K562 (cell line): ENCODE measurements at regions of chr1 and their contacts with region 1.

Region 1: GRCh38 chr1:36099681-36100341 is 11.1 kb downstream of the ADPRS start:
- DNase-seq: peak; percentile 87 to 91 (median 88)
- ATAC-seq: peak; percentile 96
- H3K4me3 ChIP-seq: peak overlapping the region; percentile 20; the same call in 1 of the 2 replicates
- H3K27ac ChIP-seq: no peak overlapping the region; the same call in 2 of the 3 replicates
- H3K4me1 ChIP-seq: peaks cover 0 to 36% of the 10 kb centered on the region in 2 experiments; a peak in 3 of 5 replicates
- H3K27me3 ChIP-seq: no peaks in the 10 kb centered on the region
- CTCF ChIP-seq: peak; percentile 94 to 95 (median 95)
- EP300 ChIP-seq: no peak
- POLR2A ChIP-seq: no peak
- RAD21 ChIP-seq: peak; percentile 95

Region 2: DNA sequence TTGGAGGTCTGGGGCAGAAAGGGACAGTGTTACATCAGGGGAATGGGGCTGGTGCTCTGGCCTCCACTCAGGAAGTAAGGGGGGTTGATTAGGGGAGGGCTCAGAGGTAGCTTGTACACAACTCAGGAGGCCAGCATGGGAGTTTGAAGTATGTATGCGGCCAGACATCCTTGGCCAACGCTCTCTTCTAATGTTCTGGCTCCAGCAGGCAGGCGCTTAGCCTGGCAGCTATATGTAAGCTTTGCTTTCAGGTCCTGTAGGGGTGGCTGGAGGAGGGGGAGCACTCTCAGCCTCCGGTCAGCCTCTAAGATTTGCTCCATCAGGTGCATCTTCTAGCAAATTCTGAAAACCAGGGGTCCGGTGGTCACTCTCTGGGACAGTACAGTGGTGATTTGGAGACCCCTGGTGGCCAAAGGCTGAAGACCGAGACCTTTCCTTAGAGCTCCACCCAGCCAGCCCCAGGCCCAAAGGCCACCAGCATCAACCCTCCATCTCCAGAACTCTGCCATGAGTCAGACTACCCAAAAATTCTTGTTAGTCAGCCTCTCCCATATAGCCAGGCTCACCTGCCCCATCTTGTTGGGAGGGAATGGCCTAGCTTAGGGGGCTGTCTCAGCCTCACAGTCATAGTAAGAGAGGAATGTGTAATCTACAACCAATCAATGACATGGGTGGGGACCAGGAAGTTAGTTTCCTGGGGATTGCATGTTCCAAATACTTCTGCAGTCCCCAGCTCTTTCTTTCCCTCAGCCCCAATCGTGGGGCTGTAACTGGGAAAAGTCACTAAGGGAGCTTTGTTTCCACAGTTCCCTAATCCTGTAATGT is 34.9 kb after region 1 on chr1:
- CTCF ChIA-PET with region 1: interaction called, 116 read pairs
- POLR2A ChIA-PET with region 1: interaction called, 4 read pairs
- in situ Hi-C with region 1: no loop called
- intact Hi-C with region 1: loop called (anchors 1 kb)
- DNase-seq: peak; percentile 85 to 90 (median 86)
- ATAC-seq: peak; percentile 97
- H3K4me3 ChIP-seq: no peak overlapping the region
- H3K27ac ChIP-seq: peak overlapping the region; percentile 38
- H3K4me1 ChIP-seq: peaks cover 5 to 6% of the 10 kb centered on the region in 2 experiments; a peak in 3 of 5 replicates
- H3K27me3 ChIP-seq: no peaks in the 10 kb centered on the region
- CTCF ChIP-seq: peak; percentile 92 to 99 (median 96)
- EP300 ChIP-seq: no peak
- POLR2A ChIP-seq: no peak
- RAD21 ChIP-seq: peak; percentile 89 to 93

Region 3: GRCh38 chr1:36149237-36149972 is 49.6 kb after region 1 on chr1 and contains the start of gene TRAPPC3:
- CTCF ChIA-PET with region 1: interaction called, 12 read pairs
- POLR2A ChIA-PET with region 1: interaction called, 3 read pairs
- in situ Hi-C with region 1: no loop called
- intact Hi-C with region 1: no loop called
- DNase-seq: peak; percentile 98 to 100 (median 99)
- ATAC-seq: peak; percentile 95
- H3K4me3 ChIP-seq: peak within 1 kb of the TSS; percentile 69
- H3K27ac ChIP-seq: peak within 1 kb of the TSS; percentile 87
- H3K4me1 ChIP-seq: peaks cover 31 to 34% of the 10 kb centered on the region in 2 experiments
- H3K27me3 ChIP-seq: no peaks in the 10 kb centered on the region
- CTCF ChIP-seq: peak; percentile 97 to 99 (median 99)
- EP300 ChIP-seq: peak; percentile 43; the same call in 1 of the 2 replicates
- POLR2A ChIP-seq: peak; percentile 95
- RAD21 ChIP-seq: peak; percentile 99 to 100
- polyA plus RNA-seq, gene TRAPPC3: 20.6 to 41.8 TPM

Region 4: DNA sequence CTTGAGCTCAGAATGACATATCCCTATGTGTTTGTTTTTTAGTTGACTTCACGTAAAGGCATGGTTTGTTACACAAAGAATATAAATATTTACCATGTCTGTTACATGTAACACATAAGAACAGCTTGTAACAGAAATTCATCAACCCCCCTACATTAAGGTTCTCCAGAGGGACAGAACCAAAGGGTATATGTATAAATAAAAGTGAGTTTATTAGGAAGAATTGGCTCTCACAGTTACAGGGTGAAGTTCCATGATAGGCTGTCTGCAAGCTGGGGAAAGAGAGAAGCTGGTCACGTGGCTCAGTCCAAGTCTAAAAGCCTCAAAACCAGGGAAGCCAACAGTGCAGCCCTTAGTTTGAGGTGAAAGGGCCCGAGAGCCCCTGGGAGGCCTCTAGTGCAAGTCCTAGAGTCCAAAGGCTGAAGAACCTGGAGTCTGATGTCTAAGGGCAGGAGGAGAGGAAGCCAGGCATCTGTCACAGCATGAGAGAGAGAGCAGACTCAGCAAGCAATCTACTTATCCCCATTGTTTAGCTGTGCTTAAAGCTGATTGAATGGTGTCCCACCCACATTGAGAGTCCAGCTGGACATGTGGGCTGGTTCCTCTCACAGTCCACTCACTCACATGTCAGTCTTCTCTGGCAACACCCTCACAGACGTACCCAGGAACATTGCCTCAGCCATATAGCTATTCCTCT is 140.3 kb after region 1 on chr1:
- CTCF ChIA-PET with region 1: no interaction called
- POLR2A ChIA-PET with region 1: no interaction called
- in situ Hi-C with region 1: no loop called
- intact Hi-C with region 1: no loop called
- DNase-seq: peak in 1 of 4 experiments; percentile 24
- ATAC-seq: peak; percentile 54
- H3K4me3 ChIP-seq: no peak overlapping the region
- H3K27ac ChIP-seq: peak overlapping the region; percentile 15; the same call in 1 of the 3 replicates
- H3K4me1 ChIP-seq: peaks cover 6% of the 10 kb centered on the region in 2 experiments; a peak in 4 of 5 replicates
- H3K27me3 ChIP-seq: no peaks in the 10 kb centered on the region
- CTCF ChIP-seq: no peak
- EP300 ChIP-seq: no peak
- POLR2A ChIP-seq: no peak
- RAD21 ChIP-seq: no peak

Region 5: DNA sequence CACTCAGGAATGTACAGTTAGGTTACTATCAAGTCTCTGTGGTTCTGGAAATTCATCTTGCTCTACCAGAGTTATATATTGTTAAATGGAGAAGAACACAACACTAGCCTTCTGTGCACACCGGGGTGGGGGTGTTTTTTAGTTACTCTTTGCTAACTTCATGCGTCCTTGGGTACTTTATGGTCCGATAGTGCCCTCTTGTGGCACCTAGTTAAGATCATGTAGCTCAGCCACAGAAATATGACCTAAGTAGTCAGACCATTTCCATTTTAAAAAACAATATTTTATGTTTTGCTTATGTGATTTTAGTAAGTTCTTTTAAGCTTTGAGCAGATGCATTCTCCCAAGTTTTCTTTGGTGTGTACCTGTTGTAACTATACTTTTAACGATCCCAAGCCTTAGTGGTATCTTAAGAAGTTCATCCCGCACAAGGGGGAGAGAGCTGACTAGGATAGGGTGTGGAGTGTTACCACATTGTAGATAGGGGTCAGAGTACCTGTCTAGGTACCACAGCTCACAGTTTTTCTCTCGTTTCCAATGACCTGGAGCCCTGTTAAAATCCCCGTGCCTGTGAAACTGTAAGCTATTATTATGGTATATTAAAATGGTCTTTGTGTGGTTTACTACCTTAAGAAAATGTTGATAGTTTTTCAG is 185.8 kb after region 1 on chr1:
- CTCF ChIA-PET with region 1: interaction called, 98 read pairs
- POLR2A ChIA-PET with region 1: interaction called, 3 read pairs
- in situ Hi-C with region 1: loop called (anchors 5 kb)
- intact Hi-C with region 1: loop called (anchors 1 kb)
- DNase-seq: peak; percentile 77 to 93 (median 80)
- ATAC-seq: peak; percentile 95
- H3K4me3 ChIP-seq: no peak overlapping the region
- H3K27ac ChIP-seq: no peak overlapping the region
- H3K4me1 ChIP-seq: no peaks in the 10 kb centered on the region
- H3K27me3 ChIP-seq: no peaks in the 10 kb centered on the region
- CTCF ChIP-seq: peak; percentile 77 to 91 (median 81)
- EP300 ChIP-seq: no peak
- POLR2A ChIP-seq: no peak
- RAD21 ChIP-seq: peak; percentile 88 to 93

Region 6: DNA sequence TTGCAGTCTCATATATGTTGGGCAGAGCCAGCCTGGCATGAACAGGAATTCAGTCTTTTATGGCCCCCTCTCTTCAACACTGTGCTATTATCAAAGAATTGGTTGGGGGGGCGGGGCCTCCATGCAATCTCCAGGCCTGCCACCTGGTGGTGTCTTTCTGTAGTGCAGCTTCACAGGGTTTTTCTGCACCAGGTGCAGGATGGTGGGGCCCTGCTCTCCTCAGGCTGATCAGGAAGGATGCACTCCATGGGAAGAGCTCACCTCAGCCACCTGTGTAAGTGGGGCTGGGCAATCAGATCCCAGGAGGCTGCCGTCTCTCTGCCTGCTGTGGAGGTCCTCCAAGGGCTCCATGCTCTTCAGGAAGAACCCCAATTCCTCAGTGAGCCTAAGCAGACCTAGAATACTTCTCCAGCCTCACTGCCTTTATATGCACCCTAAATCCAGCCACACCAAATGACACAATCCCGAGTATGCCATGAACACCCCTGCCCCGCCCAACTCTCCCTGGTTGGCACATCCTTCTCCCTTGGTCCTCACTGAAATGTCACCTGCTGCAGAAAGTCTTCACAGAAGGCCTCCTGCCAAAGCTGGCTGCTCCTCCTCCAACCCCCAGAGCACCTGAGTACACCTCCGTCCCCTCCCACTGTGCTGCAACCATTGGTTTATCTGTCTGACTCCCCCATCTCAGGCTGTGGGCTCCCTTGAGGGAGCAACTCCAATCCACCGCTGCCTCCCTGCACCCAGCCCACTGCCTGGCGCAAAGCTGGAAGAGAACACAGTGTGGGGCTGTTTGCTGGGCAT is 269.4 kb after region 1 on chr1:
- CTCF ChIA-PET with region 1: interaction called, 11 read pairs
- POLR2A ChIA-PET with region 1: no interaction called
- in situ Hi-C with region 1: no loop called
- intact Hi-C with region 1: no loop called
- DNase-seq: peak; percentile 89 to 91 (median 89)
- ATAC-seq: peak; percentile 61
- H3K4me3 ChIP-seq: no peak overlapping the region
- H3K27ac ChIP-seq: no peak overlapping the region; the same call in 2 of the 3 replicates
- H3K4me1 ChIP-seq: peaks cover 41 to 51% of the 10 kb centered on the region in 2 experiments
- H3K27me3 ChIP-seq: no peaks in the 10 kb centered on the region
- CTCF ChIP-seq: peak; percentile 94 to 96 (median 95)
- EP300 ChIP-seq: no peak
- POLR2A ChIP-seq: 0 out of 2 replicates have a peak, but pooled peaks have one; percentile 11
- RAD21 ChIP-seq: peak; percentile 60 to 80